Dorsolateral prefrontal cortex (tissue), 120 donors: ENCODE measurements at regions of chr18 and their contacts with region 1.

Region 1: DNA sequence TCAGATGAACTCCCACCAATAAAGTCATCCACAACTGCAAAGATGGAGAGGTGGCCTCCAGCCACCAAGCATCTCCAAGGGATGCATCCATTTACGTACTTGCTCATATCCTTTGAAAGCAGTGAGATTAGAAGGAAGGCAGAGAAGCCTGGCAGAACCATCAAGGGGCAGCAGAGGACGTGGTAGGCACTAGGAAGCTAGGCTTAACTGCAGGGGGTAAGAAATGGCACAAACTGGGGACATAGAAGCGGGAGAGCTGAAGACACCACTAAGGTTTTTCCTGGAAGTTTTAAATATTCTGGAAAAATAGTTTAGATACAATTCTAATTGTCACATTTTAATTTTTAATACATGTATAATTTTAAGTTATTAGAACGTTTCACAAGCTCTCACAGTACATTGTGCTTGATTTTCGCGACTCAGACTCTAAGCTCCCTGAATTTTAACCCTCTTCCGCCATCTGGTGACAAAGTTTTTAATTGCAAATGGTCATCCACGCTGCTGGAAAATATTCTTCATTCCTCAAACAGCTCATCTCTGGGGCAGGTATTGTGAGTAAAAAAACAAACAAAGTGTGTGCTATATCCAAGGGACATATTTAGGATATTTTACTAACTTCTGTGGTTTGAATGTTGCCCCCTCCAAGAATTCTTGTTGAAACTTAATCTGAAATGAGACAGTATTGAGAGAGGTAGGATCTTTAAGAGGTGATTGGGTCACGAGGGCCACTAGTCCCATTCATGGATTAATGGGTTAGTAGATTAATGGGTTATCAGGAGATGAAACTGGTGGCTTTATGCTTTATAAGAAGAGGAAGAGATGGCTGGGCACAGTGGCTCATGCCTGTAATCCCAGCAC is 1.6 kb upstream of the PSTPIP2 start:
- DNase-seq: peak in 3 of 10 donors; percentile 11 to 34 (median 31)
- H3K4me3 ChIP-seq: peak overlapping the region in 1 of 59 donors; percentile 17
- H3K27ac ChIP-seq: no peak overlapping the region
- H3K27me3 ChIP-seq: peaks cover 0 to 15% (median 0%) of the 10 kb centered on the region in 45 donors
- CTCF ChIP-seq: peak; percentile 56 to 87 (median 73)

Region 2: DNA sequence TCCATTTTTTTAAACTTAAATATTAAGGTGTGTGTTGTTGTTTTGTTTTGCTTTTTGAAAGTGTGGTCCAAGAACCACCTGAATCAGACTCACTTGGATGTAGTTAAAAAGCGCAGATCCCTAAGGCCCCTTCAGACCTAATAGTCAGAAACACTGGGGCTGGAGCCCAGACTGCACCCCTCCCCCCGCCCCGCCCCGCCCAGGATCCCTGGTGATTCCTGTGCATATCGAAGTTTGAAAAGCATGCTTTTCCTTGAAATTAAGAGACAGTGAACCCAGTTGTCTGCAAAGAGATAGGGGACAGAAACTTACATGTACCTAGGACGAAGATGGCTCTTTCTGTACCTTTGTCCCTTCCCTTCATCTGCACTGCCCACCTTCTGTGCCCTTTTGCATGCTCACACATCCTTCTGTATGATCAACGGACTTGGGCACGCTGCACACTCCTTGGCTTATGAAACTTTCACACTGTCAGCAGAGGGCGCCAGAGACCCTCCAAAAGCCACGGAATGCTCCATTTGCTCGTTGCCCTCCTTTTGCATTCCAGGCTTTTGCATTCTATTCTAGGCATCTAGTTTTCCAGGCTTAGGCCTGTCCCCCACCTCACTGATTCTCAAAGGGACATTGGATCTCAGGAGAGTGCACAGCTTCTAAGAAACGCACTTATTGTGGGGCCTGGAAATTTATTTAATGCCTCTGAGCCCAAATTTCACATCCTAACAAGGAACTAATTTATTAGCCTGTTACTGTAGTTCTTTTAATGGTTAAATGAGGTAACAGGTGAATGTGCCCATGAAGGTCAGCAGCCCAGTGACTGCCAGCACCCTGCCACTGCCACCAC is 382.5 kb before region 1 on chr18:
- intact Hi-C with region 1: loop called in 1 of 2 experiments (anchors 2 kb)
- DNase-seq: peak in 9 of 10 donors; percentile 60 to 85 (median 76)
- H3K4me3 ChIP-seq: no peak overlapping the region
- H3K27ac ChIP-seq: no peak overlapping the region
- H3K27me3 ChIP-seq: no peaks in the 10 kb centered on the region
- CTCF ChIP-seq: peak; percentile 49 to 96 (median 85)

Region 3: GRCh38 chr18:45910405-45911023 is 163.2 kb before region 1 on chr18:
- intact Hi-C with region 1: loop called (anchors 10 kb)
- DNase-seq: peak in 4 of 10 donors; percentile 11 to 47 (median 21)
- H3K4me3 ChIP-seq: no peak overlapping the region
- H3K27ac ChIP-seq: no peak overlapping the region
- H3K27me3 ChIP-seq: no peaks in the 10 kb centered on the region
- CTCF ChIP-seq: peak in 55 of 56 donors; percentile 15 to 75 (median 55)

Region 4: DNA sequence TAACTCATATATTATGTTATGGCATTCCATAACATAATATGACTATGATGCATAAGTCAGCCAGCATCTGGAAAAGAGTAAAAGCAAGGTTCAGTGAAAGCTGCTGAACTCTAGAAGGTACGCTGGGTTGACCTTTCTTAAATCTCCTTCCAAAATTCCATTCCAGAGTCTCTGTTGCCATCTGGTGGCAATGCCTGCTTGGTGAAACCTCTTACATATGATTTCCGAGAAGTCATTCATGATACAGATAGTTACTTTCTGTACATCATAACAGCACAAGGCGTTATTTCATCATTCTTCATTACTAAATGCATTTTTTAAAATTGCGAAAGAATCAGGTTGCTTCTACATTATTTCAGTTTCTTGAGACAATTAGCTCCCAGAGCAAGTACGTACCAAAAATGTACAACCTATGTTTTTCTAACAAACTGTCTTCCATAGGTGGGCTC is 99.6 kb before region 1 on chr18:
- intact Hi-C with region 1: loop called (anchors 2 to 10 kb)
- DNase-seq: peak in 3 of 10 donors; percentile 43 to 69 (median 57)
- H3K4me3 ChIP-seq: peak overlapping the region in 26 of 59 donors; percentile 2 to 39 (median 26)
- H3K27ac ChIP-seq: no peak overlapping the region
- H3K27me3 ChIP-seq: no peaks in the 10 kb centered on the region
- CTCF ChIP-seq: peak; percentile 44 to 88 (median 75)